ENCODE measurements at regions of chr20 and their contacts with region 1.

Region 1: DNA sequence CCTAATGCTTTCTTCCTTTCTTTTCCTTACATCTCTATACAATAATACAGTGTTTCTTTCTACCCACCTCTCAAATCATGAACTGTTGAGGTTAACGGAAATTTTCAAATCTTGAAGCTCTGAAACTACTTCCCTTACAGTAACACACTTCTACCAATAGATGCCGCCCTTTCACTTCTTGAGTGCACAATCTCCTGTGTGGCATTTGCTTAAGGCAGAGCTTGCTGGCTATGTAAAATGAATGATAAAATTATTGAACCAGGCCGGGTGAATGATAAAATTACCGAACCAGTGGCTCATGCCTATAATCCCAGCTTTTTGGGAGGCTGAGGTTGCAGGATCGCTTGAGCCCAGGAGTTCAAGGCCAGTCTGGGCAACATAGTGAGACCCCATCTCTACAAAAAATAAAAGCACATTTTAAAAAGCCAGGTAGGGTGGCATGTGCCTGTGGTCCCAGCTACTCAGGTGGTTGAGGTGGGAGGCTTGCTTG is 56.8 kb downstream of the KCNS1 start:
- DNase-seq: peak in 1 of 2 experiments; percentile 13
- H3K4me3 ChIP-seq: no peak overlapping the region
- H3K27ac ChIP-seq: no peak overlapping the region
- H3K4me1 ChIP-seq: peaks cover 0 to 14% (median 2%) of the 10 kb centered on the region in 4 experiments; a peak in 3 of 7 replicates
- H3K27me3 ChIP-seq: no peaks in the 10 kb centered on the region
- CTCF ChIP-seq: peak in 2 of 3 experiments; percentile 67 to 85; a peak in 2 of 4 replicates
- EP300 ChIP-seq: no peak
- POLR2A ChIP-seq: no peak
- RAD21 ChIP-seq: peak; percentile 84 to 86

Region 2: GRCh38 chr20:44683263-44684046 is 360.7 kb before region 1 on chr20:
- CTCF ChIA-PET with region 1: no interaction called
- POLR2A ChIA-PET with region 1: no interaction called
- DNase-seq: peak; percentile 70 to 83
- H3K4me3 ChIP-seq: no peak overlapping the region
- H3K27ac ChIP-seq: no peak overlapping the region
- H3K4me1 ChIP-seq: peaks cover 0 to 2% (median 0%) of the 10 kb centered on the region in 4 experiments; a peak in 1 of 7 replicates
- H3K27me3 ChIP-seq: peaks cover 0 to 2% (median 0%) of the 10 kb centered on the region in 4 experiments; a peak in 2 of 7 replicates
- CTCF ChIP-seq: peak; percentile 61 to 86 (median 81)
- EP300 ChIP-seq: no peak
- POLR2A ChIP-seq: no peak
- RAD21 ChIP-seq: peak; percentile 75 to 83

Region 3: GRCh38 chr20:45070932-45071632 is 27.0 kb after region 1 on chr20:
- CTCF ChIA-PET with region 1: interaction called, 20 read pairs
- POLR2A ChIA-PET with region 1: interaction called, 3 read pairs
- DNase-seq: no peak
- H3K4me3 ChIP-seq: no peak overlapping the region
- H3K27ac ChIP-seq: no peak overlapping the region
- H3K4me1 ChIP-seq: peaks cover 0 to under 1% (median 0%) of the 10 kb centered on the region in 4 experiments; a peak in 1 of 7 replicates
- H3K27me3 ChIP-seq: no peaks in the 10 kb centered on the region
- CTCF ChIP-seq: no peak
- EP300 ChIP-seq: no peak
- POLR2A ChIP-seq: no peak
- RAD21 ChIP-seq: no peak

Region 4: DNA sequence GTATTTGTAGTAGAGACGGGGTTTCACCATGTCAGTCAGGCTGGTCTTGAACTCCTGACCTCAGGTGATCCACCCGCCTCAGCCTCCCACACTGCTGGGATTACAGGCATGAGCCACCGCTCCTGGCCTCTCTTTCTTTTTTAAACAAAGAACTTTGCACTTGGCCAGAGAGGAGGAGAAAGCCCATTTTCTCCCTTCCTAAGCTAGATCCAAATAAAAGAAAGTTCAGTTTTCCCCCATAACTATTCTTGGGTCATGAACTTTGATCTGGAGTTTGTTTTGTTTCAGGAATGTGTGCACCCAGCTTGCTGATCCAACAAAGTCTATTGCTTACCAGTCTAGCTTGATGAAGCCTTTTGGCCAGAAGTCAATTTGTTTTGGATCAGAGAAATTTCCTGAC is 33.4 kb after region 1 on chr20:
- CTCF ChIA-PET with region 1: interaction called, 20 read pairs
- POLR2A ChIA-PET with region 1: no interaction called
- DNase-seq: no peak
- H3K4me3 ChIP-seq: no peak overlapping the region
- H3K27ac ChIP-seq: no peak overlapping the region
- H3K4me1 ChIP-seq: peaks cover 0 to 8% (median 2%) of the 10 kb centered on the region in 4 experiments; a peak in 1 of 7 replicates
- H3K27me3 ChIP-seq: no peaks in the 10 kb centered on the region
- CTCF ChIP-seq: no peak
- EP300 ChIP-seq: no peak
- POLR2A ChIP-seq: no peak
- RAD21 ChIP-seq: no peak

Region 5: GRCh38 chr20:45211569-45212474 is 167.7 kb after region 1 on chr20:
- CTCF ChIA-PET with region 1: no interaction called
- POLR2A ChIA-PET with region 1: no interaction called
- DNase-seq: no peak
- H3K4me3 ChIP-seq: no peak overlapping the region
- H3K27ac ChIP-seq: no peak overlapping the region
- H3K4me1 ChIP-seq: peaks cover 3 to 18% (median 11%) of the 10 kb centered on the region in 4 experiments; a peak in 6 of 7 replicates
- H3K27me3 ChIP-seq: peaks cover 0 to 1% (median 0%) of the 10 kb centered on the region in 4 experiments; a peak in 2 of 7 replicates
- CTCF ChIP-seq: no peak
- EP300 ChIP-seq: no peak
- POLR2A ChIP-seq: no peak
- RAD21 ChIP-seq: no peak